Esophagus squamous epithelium (tissue), 5 donors: ENCODE measurements at regions of chr2 and their contacts with region 1.

Region 1: DNA sequence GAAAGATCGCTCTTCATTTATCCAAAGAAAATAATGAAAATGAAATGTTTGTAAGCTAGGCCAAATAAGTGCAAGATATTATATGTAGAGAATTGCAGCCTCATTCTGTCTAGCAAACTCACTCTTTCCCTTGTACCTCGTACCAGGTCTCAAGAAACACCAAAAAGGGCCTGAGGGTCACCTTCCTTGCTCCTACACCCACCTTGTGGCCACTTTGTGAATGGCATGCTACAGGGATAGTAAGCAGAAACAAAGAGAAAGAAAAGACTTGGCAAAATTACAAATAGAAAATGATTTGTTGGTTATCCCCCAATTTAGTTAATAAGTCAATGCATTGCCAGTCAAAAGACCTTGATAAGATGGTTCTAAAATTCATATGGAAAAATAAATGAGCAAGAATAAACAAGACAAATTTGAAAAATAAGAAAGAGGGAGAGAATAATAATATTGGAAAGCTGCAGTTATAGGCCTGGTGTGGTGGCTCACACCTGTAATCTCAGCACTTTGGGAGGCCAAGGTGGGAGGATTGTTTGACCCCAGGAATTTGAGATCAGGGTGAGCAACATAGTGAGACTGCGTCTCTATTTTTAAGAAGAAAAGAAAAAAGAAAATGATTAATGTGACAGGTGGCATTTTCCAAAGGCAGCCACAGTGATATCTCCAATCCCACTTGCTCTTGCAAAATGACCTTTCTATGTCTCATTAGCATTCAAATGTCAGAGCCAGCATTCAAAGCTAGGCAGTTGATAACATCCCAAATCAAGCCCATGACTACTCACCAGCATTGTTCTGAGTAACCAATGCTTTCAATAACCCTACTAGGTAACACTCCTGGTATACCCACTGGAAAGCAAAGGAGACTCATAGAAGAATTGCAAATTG is 38.8 kb upstream of the BMP10 start:
- DNase-seq: no peak
- H3K4me3 ChIP-seq: no peak overlapping the region
- H3K27ac ChIP-seq: no peak overlapping the region
- H3K4me1 ChIP-seq: peaks cover 11 to 24% (median 17%) of the 10 kb centered on the region in 3 donors
- H3K27me3 ChIP-seq: no peaks in the 10 kb centered on the region
- CTCF ChIP-seq: peak; percentile 78 to 95 (median 93)
- POLR2A ChIP-seq: no peak

Region 2: DNA sequence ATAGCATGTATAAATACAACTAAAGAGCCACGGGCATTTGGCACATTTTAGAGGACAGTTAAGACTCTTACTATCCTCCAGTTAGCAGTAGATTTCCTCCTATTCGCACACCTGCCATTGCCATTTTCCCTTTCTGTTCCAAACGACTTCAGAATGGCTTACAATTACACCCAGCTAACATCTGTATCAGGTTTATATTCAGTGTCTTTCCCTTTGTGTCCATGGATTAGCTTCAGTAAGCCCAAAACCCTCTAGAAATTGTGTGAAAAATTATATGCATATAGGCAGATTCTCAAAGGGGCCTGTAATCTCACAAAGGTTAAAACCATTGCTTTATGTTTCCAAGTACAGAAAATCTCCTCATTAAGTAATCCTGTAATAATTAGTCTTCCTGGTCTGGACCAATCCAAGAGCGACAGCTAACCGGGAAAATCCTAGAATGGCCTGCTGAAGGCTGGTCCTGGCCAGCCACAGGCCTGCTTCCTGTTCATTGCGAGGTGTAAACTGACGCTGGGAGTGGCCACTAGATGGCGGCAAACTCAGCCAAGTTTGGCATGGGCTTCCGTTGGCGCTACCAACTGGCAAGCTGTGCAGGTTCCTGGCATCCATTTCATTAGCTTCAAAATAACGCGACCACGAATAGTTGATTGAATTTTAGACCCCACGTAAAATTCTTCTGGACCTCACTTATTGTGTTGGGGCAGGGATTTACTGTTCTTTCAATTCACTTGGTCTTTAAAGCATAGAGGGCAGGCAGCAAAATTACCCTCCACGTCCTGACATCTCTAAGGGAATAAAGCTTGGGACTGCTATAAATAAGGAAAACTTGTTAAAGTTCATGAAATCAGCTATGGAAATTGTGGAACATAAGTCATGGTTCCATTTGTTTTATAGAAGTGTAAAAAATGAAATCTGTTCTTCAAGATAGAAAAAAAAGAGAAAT is 158.4 kb before region 1 on chr2:
- intact Hi-C with region 1: loop called (anchors 5 kb)
- DNase-seq: peak; percentile 36
- H3K4me3 ChIP-seq: no peak overlapping the region
- H3K27ac ChIP-seq: peak overlapping the region in 3 of 4 donors; percentile 36 to 68 (median 63)
- H3K4me1 ChIP-seq: peaks cover 0 to 31% (median 18%) of the 10 kb centered on the region in 3 donors
- H3K27me3 ChIP-seq: no peaks in the 10 kb centered on the region
- CTCF ChIP-seq: peak; percentile 90 to 95 (median 94)
- POLR2A ChIP-seq: no peak

Region 3: DNA sequence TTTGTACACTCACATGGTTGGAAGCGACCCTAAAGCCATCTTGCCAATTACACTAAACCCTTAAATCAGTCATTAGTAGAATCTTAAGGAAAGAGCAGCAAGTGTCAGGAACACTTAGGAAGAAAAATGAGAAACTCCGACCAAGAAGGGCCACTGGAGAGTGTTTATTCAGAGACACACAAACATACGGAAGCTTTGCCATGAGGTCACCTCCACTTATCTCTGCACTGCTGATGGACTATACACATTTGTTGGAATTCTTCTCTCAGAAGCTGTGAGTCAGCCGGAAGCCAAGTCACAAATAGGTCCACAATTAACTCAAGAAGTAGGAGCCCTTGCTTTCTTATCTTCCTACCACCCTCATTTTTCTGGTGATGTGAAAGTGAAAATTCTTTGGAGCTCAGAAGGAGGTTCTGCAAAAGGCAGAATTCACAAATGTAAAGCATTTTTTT is 60.4 kb before region 1 on chr2:
- intact Hi-C with region 1: loop called (anchors 10 kb)
- DNase-seq: no peak
- H3K4me3 ChIP-seq: no peak overlapping the region
- H3K27ac ChIP-seq: no peak overlapping the region
- H3K4me1 ChIP-seq: no peaks in the 10 kb centered on the region
- H3K27me3 ChIP-seq: no peaks in the 10 kb centered on the region
- CTCF ChIP-seq: no peak
- POLR2A ChIP-seq: no peak

Region 4: GRCh38 chr2:69046221-69046662 is 136.2 kb after region 1 on chr2:
- intact Hi-C with region 1: no loop called
- DNase-seq: no peak
- H3K4me3 ChIP-seq: no peak overlapping the region
- H3K27ac ChIP-seq: peak overlapping the region in 1 of 4 donors; percentile 65
- H3K4me1 ChIP-seq: peaks cover 0 to 27% (median 8%) of the 10 kb centered on the region in 3 donors
- H3K27me3 ChIP-seq: no peaks in the 10 kb centered on the region
- CTCF ChIP-seq: no peak
- POLR2A ChIP-seq: no peak

Region 5: GRCh38 chr2:69082430-69082997 is 172.5 kb after region 1 on chr2:
- intact Hi-C with region 1: no loop called
- DNase-seq: no peak
- H3K4me3 ChIP-seq: no peak overlapping the region
- H3K27ac ChIP-seq: peak overlapping the region; percentile 61 to 81 (median 71)
- H3K4me1 ChIP-seq: peaks cover 0 to 33% (median 21%) of the 10 kb centered on the region in 3 donors
- H3K27me3 ChIP-seq: no peaks in the 10 kb centered on the region
- CTCF ChIP-seq: no peak
- POLR2A ChIP-seq: no peak